MCF 10A (cell line): ENCODE measurements at regions of chr6 and their contacts with region 1.

Region 1: DNA sequence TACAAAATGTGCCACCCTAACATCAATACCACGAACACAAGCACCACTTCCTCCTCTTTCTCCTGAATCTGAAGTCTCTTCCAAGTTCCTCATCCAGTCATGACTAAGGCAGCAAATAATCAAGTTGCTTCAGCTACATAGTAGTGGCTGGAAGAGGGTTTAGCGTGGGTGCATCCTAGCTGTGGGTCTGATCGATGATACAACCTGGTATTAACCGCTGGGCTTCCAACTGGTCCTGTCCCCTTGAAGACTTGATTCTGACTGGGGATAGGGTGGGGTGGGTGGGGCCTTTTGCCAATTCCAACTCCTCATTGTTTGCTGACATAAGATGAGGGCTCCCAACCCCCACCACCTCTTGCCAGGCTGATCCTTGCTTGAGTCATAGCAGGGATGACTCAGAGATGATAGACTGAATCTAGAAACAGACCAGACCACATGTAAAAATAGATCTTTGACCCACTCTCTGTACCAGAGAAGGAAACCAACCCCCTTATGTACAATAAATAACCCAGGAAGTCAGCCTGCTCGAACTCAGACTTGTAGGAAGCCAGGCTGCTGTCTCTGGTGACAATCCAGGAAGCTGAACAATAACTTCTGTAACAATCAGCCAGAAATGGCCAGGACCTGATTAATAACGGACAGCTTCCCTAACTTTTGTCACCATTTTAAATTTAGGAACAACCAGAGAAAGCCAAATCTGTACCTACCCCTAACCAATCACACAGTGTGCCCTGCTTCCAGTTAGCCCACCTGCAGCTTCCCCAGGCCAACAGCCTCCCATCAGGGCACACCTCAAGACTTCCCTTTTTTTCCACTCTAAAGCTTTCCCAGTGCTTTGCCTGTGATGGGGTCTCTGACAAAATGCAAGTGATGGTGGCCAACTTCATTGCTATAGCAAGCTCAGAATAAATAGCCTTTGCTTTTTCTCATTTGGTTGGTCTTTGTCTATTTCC is 68.9 kb upstream of the FAM184A start:
- DNase-seq: peak; percentile 96
- H3K4me3 Mint-ChIP-seq: no peak overlapping the region
- H3K27ac Mint-ChIP-seq: peak overlapping the region; percentile 0
- H3K4me1 Mint-ChIP-seq: peaks cover 19% of the 10 kb centered on the region
- H3K27me3 Mint-ChIP-seq: no peaks in the 10 kb centered on the region
- CTCF ChIP-seq: no peak

Region 2: GRCh38 chr6:118787724-118788423 is 359.5 kb before region 1 on chr6:
- CTCF ChIA-PET with region 1: no interaction called
- POLR2A ChIA-PET with region 1: no interaction called
- intact Hi-C with region 1: no loop called
- DNase-seq: no peak
- H3K4me3 Mint-ChIP-seq: no peak overlapping the region
- H3K27ac Mint-ChIP-seq: no peak overlapping the region
- H3K4me1 Mint-ChIP-seq: peaks cover 7% of the 10 kb centered on the region
- H3K27me3 Mint-ChIP-seq: no peaks in the 10 kb centered on the region
- CTCF ChIP-seq: no peak

Region 3: DNA sequence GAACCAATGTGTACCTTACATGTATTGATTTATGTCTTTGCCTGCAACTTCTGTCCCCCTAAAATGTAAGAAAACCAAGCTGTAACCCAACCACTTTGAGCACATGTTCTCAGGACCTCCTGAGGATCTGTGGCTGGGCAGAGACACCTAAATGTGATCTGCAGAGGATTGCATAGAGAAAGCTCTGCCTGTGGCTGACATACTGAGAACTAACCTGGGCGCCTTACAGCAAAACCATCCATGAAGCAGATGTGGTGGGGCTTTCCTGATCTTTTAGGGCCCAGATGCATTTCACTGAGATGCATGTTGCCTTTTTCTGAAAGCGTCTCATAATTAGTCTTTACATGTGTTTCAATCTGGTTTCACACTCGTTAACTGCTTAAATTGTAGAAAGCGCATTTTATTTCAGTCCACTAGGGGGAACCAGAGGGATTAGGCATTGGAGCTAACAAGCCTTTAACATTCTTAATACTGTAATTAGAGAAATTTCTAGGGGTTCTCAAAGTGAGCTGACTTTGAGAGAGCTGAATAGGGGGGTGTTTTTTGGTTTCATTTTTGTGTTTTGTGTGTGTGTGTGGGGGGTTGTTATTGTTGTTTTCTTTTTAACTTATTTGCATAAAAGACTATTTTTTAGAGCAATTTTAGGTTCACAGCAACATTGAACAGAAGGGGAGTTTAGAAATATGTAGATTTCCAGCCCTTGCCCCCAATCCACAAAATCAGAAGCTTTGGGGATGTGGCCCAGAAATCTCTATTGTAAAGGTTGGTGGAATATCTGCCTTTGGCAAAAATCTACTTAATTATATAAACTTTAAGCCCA is 18.0 kb before region 1 on chr6:
- CTCF ChIA-PET with region 1: interaction called, 33 read pairs
- POLR2A ChIA-PET with region 1: interaction called, 3 read pairs
- intact Hi-C with region 1: loop called (anchors 1 kb)
- DNase-seq: peak; percentile 81
- H3K4me3 Mint-ChIP-seq: no peak overlapping the region
- H3K27ac Mint-ChIP-seq: peak overlapping the region; percentile 66
- H3K4me1 Mint-ChIP-seq: peaks cover 21% of the 10 kb centered on the region
- H3K27me3 Mint-ChIP-seq: no peaks in the 10 kb centered on the region
- CTCF ChIP-seq: peak; percentile 72

Region 4: DNA sequence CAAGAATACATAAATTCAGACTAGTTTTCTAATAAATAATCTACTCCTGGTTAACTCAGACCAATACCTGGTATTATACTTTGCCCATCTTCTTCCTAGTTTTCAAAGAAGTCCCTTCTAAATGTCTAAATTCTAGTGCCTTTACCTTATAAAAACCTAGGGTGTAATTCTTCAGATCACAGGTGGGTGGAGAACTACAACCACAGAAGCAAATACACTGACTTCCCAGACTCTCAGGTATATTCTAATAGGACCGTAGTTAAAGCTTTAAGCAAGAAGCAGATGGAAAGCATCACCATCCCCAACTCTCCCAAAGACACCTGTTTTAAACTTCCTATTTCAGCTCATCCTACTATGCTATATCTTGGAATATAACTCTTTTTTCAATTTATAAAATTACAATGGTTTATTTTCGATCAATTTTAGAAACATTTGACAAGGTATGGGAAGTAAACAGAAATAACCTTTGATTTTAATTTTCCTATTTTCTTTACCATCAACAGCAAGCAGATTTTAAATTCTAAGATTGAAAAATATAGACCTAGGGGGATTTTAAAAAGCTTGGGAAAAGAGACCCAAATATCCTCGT is 186.4 kb after region 1 on chr6:
- CTCF ChIA-PET with region 1: interaction called, 60 read pairs
- POLR2A ChIA-PET with region 1: interaction called, 3 read pairs
- intact Hi-C with region 1: loop called (anchors 1 kb)
- DNase-seq: peak; percentile 44
- H3K4me3 Mint-ChIP-seq: no peak overlapping the region
- H3K27ac Mint-ChIP-seq: no peak overlapping the region
- H3K4me1 Mint-ChIP-seq: no peaks in the 10 kb centered on the region
- H3K27me3 Mint-ChIP-seq: no peaks in the 10 kb centered on the region
- CTCF ChIP-seq: peak; percentile 45

Region 5: DNA sequence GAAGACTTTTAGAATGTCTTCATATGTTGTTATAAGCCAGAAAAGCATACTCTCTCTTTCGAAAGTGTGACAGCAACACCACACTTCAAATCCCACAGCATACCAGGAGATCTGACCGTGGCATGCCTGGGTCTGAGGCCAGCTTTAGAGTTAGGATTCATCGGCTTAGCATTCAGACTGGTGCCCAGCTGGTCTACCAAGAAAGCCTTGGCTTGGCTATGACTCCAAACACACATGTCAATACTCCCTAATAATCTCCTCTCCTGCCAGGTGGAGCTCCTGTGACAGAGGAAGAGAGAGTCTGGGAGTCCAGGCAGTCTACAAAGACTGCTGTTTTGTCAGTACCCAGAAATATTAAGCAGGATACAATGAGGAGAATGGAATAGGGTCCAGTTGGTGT is 279.2 kb after region 1 on chr6:
- CTCF ChIA-PET with region 1: interaction called, 10 read pairs
- POLR2A ChIA-PET with region 1: no interaction called
- intact Hi-C with region 1: no loop called
- DNase-seq: no peak
- H3K4me3 Mint-ChIP-seq: no peak overlapping the region
- H3K27ac Mint-ChIP-seq: no peak overlapping the region
- H3K4me1 Mint-ChIP-seq: peaks cover 9% of the 10 kb centered on the region
- H3K27me3 Mint-ChIP-seq: no peaks in the 10 kb centered on the region
- CTCF ChIP-seq: no peak

Region 6: DNA sequence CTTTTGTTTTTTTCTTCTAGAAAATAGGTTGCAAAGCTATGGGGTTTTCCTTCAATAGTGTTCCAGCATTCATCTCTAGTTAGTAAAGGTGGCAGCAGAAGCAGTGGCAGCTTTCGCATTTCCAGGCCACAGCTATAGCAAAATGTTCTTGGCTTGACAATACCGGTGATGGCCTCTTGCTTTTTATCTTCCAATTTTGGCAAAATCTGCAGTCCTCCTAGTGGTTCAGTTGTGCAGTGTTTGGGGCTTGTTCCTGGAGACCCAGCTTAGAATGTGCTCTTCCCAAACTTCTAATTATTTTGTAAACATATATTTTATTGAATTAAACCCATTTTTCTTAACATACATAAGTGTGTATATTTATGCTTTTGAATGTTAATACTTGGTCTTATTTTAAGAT is 572.8 kb after region 1 on chr6:
- CTCF ChIA-PET with region 1: interaction called, 4 read pairs
- POLR2A ChIA-PET with region 1: no interaction called
- intact Hi-C with region 1: loop called (anchors 5 kb)
- DNase-seq: peak; percentile 16
- H3K4me3 Mint-ChIP-seq: no peak overlapping the region
- H3K27ac Mint-ChIP-seq: no peak overlapping the region
- H3K4me1 Mint-ChIP-seq: no peaks in the 10 kb centered on the region
- H3K27me3 Mint-ChIP-seq: no peaks in the 10 kb centered on the region
- CTCF ChIP-seq: no peak

Region 7: GRCh38 chr6:119978274-119978889 is 831.0 kb after region 1 on chr6:
- CTCF ChIA-PET with region 1: interaction called, 18 read pairs
- POLR2A ChIA-PET with region 1: interaction called, 3 read pairs
- intact Hi-C with region 1: loop called (anchors 1 kb)
- DNase-seq: peak; percentile 33
- H3K4me3 Mint-ChIP-seq: no peak overlapping the region
- H3K27ac Mint-ChIP-seq: no peak overlapping the region
- H3K4me1 Mint-ChIP-seq: no peaks in the 10 kb centered on the region
- H3K27me3 Mint-ChIP-seq: no peaks in the 10 kb centered on the region
- CTCF ChIP-seq: peak; percentile 50

Region 8: DNA sequence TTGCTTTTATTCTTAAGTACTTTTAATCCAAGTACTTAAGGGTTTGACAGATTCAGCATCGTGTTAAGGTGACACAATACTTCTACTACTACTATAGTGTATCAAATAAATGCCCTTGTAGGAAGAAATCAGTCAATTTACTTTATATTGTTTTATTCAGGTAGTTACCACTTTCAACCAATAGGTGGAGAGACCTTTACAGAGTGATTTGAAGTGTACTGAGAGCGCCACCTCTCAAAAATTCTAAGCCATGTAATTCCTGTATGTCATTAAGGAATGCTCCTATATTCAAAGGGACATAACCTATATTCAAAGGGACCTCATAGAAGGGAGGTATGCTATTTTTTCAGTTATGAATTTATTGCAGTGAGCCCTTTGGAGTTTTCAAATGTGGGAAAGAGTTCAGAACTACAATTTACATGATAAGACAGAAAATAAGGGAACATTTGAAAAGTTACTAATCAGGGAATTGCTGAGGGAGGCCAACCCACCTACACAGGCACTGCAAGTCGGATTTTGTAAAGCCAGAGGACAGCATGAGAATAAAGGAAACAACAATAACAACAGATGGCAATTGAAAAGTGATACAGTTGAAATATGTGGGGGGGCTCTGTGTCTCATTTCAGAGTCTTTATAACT is 1231.3 kb after region 1 on chr6:
- CTCF ChIA-PET with region 1: interaction called, 5 read pairs
- POLR2A ChIA-PET with region 1: no interaction called
- intact Hi-C with region 1: loop called (anchors 1 kb)
- DNase-seq: peak; percentile 61
- H3K4me3 Mint-ChIP-seq: no peak overlapping the region
- H3K27ac Mint-ChIP-seq: no peak overlapping the region
- H3K4me1 Mint-ChIP-seq: no peaks in the 10 kb centered on the region
- H3K27me3 Mint-ChIP-seq: peaks cover 1% of the 10 kb centered on the region
- CTCF ChIP-seq: peak; percentile 50